ENCODE measurements at regions of chr6 and their contacts with region 1.

Region 1: DNA sequence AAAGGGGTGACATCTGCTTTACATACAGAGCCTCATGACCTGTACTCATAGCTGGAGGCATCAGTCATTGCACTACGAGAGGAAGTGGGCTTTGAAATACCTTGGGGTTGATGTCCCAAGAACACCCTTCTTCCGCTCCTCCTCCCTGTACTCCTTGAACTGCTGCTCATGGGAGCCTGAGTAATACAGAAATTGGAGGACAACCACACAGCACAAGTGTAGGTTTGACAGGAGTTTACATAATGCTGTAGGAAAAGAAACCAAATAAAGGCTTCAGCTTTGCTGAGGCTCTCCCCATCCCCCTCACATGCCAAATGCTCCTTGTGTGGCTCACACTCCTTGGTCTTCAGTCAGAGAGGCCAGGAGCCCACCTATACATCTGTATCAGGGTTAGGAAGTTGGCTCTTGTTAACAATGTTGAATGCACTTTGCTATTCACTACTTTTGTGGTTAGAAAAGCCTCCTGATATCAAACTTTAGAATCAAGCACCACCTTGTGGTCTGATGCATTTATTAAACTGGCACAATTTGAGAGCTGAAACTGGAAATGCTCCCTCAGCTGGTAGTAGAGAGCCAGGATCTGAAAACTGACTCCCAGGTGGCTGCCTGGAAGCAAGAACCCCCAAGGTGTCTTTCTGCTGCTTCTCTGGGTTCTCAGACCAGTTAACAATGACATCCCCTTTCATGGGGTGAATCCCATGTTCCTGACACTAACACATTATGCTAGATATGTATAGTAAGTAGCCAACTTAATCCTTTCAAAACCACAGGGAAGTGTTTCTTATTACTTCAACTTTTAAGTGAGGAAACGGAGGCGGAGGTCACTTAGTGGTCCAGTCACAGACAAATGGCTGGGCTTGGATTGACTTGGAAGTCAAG is 56.2 kb upstream of the EDN1 start:
- DNase-seq: peak; percentile 69
- H3K4me3 ChIP-seq: no peak overlapping the region
- H3K27ac ChIP-seq: no peak overlapping the region
- H3K4me1 ChIP-seq: no peaks in the 10 kb centered on the region
- CTCF ChIP-seq: peak; percentile 89

Region 2: DNA sequence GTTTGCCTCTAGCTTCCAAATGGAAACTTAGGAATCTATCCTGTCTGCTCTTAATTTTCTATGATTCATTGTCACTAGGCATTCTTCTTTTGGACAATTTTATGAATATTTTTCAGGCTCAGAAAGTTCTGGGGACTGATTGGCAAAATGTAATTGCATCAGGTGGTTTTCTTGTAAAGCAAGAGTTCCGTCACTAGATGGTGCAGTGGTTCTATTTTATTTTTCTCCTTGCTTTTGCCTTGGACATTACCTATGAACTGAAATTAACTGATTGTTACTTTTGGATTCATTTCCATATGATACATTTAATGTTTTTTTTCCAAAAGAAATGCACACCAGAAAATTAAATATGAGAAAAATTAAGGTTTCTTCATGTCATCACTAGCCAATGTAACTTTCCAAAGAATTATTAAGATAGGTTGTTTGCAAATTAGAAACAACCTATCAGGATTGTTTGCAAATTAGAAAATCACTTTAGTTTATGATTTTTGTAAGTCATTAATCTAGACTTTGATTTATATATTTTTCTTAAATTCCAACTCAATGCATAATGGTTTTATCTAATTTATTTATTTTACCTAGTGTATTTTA is 648.4 kb before region 1 on chr6:
- CTCF ChIA-PET with region 1: no interaction called
- POLR2A ChIA-PET with region 1: no interaction called
- intact Hi-C with region 1: loop called (anchors 5 kb)
- DNase-seq: peak; percentile 43
- H3K4me3 ChIP-seq: no peak overlapping the region
- H3K27ac ChIP-seq: no peak overlapping the region
- H3K4me1 ChIP-seq: no peaks in the 10 kb centered on the region
- CTCF ChIP-seq: peak; percentile 88

Region 3: GRCh38 chr6:12170351-12171092 is 63.4 kb before region 1 on chr6:
- CTCF ChIA-PET with region 1: no interaction called
- POLR2A ChIA-PET with region 1: no interaction called
- intact Hi-C with region 1: no loop called
- DNase-seq: no peak
- H3K4me3 ChIP-seq: no peak overlapping the region
- H3K27ac ChIP-seq: no peak overlapping the region
- H3K4me1 ChIP-seq: no peaks in the 10 kb centered on the region
- CTCF ChIP-seq: no peak

Measured in OCI-LY7 (cell line).